Spleen (tissue), 13 donors: ENCODE measurements at regions of chr14 and their contacts with region 1.

Region 1: DNA sequence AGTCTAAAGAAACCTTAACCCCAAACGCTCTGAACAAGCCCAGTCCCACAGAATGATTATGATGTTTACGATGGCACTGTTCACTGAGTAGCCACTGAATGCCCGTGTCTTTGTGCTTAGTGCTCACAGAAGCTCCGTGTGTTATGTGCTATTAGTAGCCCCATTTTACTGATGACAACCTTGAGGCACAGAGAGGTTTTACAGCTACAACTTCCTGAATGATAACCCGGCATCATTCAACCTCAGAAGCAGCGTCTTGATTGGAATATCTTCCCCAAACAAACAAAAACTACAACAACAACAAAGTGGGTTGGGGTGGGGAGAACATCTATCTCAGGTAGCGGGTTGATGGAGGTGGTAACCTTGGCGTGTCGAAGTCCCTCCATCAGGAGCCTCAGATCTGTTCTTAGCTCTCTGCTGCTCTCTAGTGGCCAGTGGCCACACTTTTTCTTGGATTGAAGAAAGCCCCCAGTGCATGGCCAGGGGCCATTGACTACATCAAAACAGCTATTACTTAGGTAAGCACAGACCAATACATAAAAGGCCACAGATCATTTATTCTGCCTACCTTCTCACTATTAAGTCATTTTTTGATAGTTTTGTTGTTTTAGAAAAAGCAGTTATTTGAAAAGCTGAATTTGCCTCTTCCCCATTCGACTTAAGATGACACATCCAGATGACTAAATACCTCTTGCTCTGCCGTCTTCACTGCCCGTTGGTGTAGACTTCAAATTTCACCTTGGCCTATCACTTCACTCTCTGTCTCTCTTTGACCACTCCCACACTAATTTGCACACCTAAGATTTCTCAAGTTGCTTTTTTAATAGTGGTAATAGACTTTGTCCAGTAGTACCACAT is 376.9 kb downstream of the GALC start:
- DNase-seq: no peak
- H3K4me3 ChIP-seq: no peak overlapping the region
- H3K27ac ChIP-seq: no peak overlapping the region
- H3K4me1 ChIP-seq: no peaks in the 10 kb centered on the region
- H3K27me3 ChIP-seq: no peaks in the 10 kb centered on the region
- CTCF ChIP-seq: peak in 10 of 11 experiments; percentile 34 to 77 (median 55)
- POLR2A ChIP-seq: no peak

Region 2: DNA sequence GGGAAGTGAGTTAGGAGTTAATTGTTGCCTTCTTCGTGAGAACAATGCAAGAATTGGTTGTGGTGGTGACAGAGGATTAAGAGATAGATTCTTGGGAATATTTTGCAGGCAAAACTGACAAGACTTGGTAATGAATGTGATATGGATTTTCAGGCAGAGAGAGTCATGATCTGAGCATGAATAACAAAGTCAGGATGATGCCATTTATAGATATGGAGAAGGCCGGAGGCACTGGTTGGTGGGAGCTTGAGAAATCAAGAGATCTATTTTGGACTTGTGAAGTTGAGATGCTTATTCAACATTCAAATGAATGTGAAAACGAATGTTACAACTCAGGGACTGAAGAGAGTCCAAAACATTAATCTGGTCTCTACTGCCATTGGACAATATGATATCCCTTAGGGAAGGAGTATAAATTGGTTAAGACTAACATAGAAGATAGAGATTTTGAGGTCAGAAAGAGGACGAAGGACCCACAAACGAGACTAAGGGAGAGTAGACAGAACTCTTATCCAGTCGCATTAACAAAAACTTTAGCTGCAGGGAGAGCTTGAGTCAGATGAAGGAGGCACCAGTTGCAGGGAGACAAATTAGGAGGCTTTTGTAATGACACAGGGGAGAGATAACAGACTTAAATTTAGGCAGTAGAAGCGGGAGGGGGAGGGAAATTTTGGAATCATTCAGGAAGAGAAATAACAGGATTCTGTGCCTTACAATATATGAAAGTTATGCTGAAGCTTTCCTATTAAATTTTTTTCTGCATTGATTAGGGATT is 713.7 kb before region 1 on chr14:
- intact Hi-C with region 1: loop called (anchors 10 kb)
- DNase-seq: no peak
- H3K4me3 ChIP-seq: no peak overlapping the region
- H3K27ac ChIP-seq: no peak overlapping the region
- H3K4me1 ChIP-seq: no peaks in the 10 kb centered on the region
- H3K27me3 ChIP-seq: no peaks in the 10 kb centered on the region
- CTCF ChIP-seq: no peak
- POLR2A ChIP-seq: no peak

Region 3: DNA sequence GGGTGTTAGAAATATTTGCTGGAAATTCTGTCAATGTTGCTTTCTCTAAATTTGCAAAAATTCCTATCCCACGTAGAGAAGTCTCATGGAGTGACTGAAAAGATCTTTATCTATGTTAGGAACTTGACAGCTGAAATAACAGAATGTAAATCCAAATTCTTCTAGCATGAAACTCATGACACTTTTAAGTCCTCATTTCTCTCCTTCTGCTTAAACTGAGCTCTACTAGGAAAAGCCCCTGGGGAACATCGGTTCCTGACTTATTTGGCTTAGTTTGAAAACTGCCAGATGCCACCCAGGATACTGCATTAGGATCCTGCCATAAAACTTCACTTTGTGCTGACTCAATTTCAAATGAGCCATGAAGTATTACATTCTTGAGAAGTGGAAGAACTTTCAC is 49.1 kb before region 1 on chr14:
- intact Hi-C with region 1: no loop called
- DNase-seq: no peak
- H3K4me3 ChIP-seq: no peak overlapping the region
- H3K27ac ChIP-seq: no peak overlapping the region
- H3K4me1 ChIP-seq: no peaks in the 10 kb centered on the region
- H3K27me3 ChIP-seq: no peaks in the 10 kb centered on the region
- CTCF ChIP-seq: no peak
- POLR2A ChIP-seq: no peak

Region 4: GRCh38 chr14:88228522-88229236 is 612.6 kb after region 1 on chr14:
- intact Hi-C with region 1: no loop called
- DNase-seq: no peak
- H3K4me3 ChIP-seq: no peak overlapping the region
- H3K27ac ChIP-seq: no peak overlapping the region
- H3K4me1 ChIP-seq: no peaks in the 10 kb centered on the region
- H3K27me3 ChIP-seq: no peaks in the 10 kb centered on the region
- CTCF ChIP-seq: no peak
- POLR2A ChIP-seq: no peak